ENCODE measurements at regions of chr3 and their contacts with region 1.

Region 1: DNA sequence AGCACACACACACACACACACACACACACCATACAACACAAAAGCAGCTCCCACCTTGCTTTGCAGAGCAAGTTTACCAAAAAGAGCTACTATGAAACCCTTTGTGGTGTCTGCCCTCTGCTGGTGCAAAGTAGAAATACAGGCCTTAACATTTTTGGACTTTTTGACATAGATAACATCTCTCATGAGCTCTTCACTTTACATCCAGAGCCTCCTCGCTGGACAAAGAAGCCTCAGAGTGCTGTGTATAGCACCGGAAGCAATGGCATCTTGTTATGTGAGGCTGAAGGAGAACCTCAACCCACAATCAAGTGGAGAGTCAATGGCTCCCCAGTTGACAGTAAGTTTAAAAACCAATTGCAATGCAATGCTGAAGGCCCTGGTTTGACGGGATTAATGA is 157.9 kb downstream of the CHL1 start:
- DNase-seq: peak; percentile 68
- H3K4me3 ChIP-seq: no peak overlapping the region
- H3K27ac ChIP-seq: no peak overlapping the region
- H3K4me1 ChIP-seq: no peaks in the 10 kb centered on the region
- CTCF ChIP-seq: peak; percentile 92

Region 2: DNA sequence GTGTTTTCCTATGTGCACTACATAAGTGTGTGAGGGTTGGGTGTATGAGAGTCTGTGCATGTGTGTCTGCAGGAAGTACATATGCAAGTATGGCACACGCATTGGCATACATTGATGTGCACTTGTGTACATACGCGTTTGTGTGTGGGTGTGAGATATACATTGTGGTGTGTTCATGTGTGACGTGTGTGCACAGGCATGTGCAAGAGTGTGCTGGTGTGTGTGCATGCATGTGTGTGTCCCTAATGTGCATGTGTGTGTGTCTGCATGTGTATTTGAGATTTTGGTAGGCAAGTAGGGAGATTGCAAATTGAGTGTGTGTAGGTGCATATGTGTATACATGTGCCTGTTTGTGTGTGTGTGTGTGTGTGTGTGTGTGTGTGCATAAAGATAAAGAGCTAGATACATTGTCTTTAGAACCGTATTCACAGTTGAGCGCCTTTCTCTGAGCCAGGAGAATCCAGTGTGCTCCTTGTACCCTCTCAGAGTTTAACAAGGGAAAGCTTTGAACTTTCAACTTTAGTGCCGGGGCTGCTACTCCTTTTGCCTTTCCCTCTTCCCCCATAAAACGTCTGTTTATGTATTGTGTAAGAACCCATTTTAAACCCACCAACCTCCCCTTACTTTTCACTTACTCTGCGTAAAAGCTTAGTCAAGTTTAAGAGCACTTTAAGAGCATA is 310.3 kb before region 1 on chr3:
- CTCF ChIA-PET with region 1: interaction called, 4 read pairs
- POLR2A ChIA-PET with region 1: interaction called, 5 read pairs
- intact Hi-C with region 1: loop called (anchors 1 kb)
- DNase-seq: no peak
- H3K4me3 ChIP-seq: no peak overlapping the region
- H3K27ac ChIP-seq: no peak overlapping the region
- H3K4me1 ChIP-seq: no peaks in the 10 kb centered on the region
- CTCF ChIP-seq: no peak

Region 3: GRCh38 chr3:207973-208372 is 146.5 kb before region 1 on chr3:
- CTCF ChIA-PET with region 1: no interaction called
- POLR2A ChIA-PET with region 1: interaction called, 3 read pairs
- intact Hi-C with region 1: loop called (anchors 5 kb)
- DNase-seq: no peak
- H3K4me3 ChIP-seq: no peak overlapping the region
- H3K27ac ChIP-seq: no peak overlapping the region
- H3K4me1 ChIP-seq: no peaks in the 10 kb centered on the region
- CTCF ChIP-seq: peak; percentile 52

Region 4: DNA sequence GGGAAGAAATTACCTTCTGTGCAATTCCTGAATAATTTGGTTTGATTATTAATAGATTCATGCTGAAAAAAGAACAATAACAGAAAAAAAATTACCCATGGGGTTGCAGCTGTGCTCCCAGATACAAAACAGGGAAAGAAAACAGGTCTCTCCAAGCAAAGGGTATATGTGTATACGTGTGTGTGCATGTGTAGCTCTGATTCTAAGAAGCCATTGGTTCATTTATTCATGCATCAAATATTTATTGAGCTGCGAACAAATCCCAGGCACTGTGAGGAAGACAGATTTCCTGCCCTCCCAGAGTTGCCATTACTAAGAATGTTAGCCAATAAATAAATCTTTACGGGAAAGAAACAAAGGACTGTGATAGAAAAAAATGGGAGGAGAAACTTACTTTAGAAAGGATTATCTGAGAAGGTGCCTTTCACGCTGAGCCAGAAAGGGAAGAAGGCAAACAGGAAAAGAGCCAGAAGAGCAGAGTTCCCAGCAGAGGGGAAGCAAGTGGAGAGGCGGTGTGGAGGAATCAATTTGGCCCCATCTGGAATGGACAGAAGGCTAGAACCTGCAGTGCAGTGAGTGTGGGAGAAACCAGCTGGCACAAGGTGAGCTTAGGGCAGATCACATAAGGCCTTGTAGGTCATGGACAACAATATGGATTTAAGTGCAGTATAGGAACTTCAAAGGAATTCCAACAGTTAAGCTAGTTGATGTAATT is 137.2 kb before region 1 on chr3:
- CTCF ChIA-PET with region 1: no interaction called
- POLR2A ChIA-PET with region 1: interaction called, 4 read pairs
- intact Hi-C with region 1: loop called (anchors 5 kb)
- DNase-seq: no peak
- H3K4me3 ChIP-seq: no peak overlapping the region
- H3K27ac ChIP-seq: no peak overlapping the region
- H3K4me1 ChIP-seq: peaks cover 8% of the 10 kb centered on the region
- CTCF ChIP-seq: no peak

Region 5: DNA sequence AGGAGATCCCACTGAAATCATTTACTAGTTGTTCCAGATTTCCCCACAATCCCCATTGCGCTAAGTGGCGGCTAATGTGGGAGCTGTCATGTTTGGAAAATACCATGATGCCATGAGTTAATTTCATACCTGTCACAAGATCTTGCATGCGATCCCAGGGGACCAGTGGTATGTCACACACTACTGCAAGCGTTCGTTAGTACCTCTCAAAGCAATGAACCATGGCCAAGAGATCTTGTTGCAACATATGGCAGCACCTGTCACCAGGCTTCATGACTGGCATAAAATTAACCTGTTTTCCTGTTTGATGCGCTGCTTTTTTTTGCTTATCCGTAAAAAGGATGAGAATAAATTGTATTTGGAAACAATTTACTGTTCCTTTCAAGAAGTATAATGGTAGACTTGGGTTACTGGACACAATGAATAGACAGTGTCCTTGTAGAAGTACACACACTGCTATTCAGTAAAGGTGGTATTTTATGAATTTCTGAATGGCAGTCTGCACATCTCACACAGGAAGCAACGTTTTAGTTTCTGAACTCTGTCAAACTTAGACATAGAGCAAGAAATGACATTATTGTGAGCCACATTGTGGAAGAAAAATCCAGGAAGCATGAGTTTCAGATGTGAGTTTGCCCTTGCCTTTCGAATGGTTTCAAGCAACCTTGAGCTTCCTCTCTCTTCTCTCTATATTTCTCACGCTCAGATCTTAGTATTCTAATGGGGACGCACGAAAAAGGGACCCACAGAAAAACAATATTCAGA is 76.0 kb before region 1 on chr3:
- CTCF ChIA-PET with region 1: interaction called, 4 read pairs
- POLR2A ChIA-PET with region 1: interaction called, 8 read pairs
- intact Hi-C with region 1: loop called (anchors 1 kb)
- DNase-seq: peak; percentile 96
- H3K4me3 ChIP-seq: peak overlapping the region; percentile 52
- H3K27ac ChIP-seq: peak overlapping the region; percentile 82
- H3K4me1 ChIP-seq: peaks cover 40% of the 10 kb centered on the region
- CTCF ChIP-seq: no peak

Region 6: GRCh38 chr3:377158-377561 is 22.7 kb after region 1 on chr3:
- CTCF ChIA-PET with region 1: no interaction called
- POLR2A ChIA-PET with region 1: interaction called, 5 read pairs
- intact Hi-C with region 1: loop called (anchors 2 kb)
- DNase-seq: peak; percentile 61
- H3K4me3 ChIP-seq: no peak overlapping the region
- H3K27ac ChIP-seq: no peak overlapping the region
- H3K4me1 ChIP-seq: no peaks in the 10 kb centered on the region
- CTCF ChIP-seq: peak; percentile 82

Measured in OCI-LY7 (cell line).